Naive thymus-derived CD8-positive, alpha-beta T cell (primary cell): ENCODE measurements at regions of chr4 and their contacts with region 1.

Region 1: DNA sequence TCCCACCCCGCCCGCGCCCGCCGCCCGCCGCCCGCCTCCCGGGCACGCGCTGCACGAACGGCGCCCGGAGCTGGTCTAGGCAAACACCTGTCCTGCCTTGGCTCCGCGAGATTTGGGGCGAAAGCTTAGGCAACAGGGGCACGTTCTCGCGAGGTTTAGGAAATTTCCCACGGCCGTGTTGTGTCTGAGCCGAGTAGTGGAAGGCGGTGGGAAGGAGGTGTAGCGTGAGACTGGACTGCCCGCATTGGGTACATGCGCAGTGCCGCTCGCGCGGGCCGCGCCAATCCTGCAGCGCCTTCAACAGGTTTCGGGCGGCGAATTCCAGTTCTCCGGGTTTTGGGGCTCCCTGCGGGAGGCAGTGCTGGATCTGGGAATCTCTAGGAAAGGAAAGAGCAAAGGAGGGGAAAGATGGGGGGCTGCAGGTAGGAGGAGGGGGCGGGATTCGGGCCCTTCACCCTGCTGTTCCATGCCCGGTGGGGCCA is 1.3 kb upstream of the RBPJ start:
- DNase-seq: peak; percentile 82 to 98 (median 94)
- ATAC-seq: peak; percentile 72 to 78
- H3K4me3 Mint-ChIP-seq: peak overlapping the region; percentile 92 to 100 (median 98)
- H3K27ac Mint-ChIP-seq: peak overlapping the region; percentile 95 to 99 (median 98)
- H3K4me1 Mint-ChIP-seq: peaks cover 20 to 44% (median 34%) of the 10 kb centered on the region in 4 donors
- H3K27me3 Mint-ChIP-seq: no peaks in the 10 kb centered on the region

Region 2: DNA sequence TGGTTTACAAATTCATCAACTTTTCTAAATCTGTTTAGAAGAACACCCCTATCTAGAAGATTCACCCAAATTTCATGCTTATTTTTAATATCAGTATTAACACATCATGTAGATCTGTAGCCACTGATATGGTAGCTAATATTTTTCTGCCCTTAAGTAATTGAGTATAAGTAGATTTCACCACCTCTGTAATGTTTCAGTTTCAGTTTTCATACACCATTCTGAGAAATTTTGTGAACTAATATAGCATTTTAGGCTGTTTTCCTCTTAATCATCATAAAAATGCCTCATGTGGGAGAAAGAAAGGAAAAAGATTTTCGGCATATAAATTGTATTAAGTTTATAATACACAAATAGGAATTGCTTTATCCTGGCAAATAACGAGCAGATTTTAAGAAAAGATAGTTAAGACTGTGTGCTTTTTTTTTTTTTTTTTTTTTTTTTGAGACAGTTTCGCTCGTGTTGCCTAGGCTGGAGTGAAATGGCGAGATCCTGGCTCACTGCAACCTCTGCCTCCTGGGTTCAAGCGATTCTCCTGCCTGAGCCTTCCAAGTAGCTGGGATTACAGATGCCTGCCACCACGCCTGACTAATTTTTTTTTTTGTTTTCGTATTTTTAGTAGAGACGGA is 20.1 kb before region 1 on chr4:
- POLR2A ChIA-PET with region 1: no interaction called
- DNase-seq: no peak
- ATAC-seq: no peak
- H3K4me3 Mint-ChIP-seq: peak overlapping the region in 2 of 10 donors; percentile 6 to 41
- H3K27ac Mint-ChIP-seq: no peak overlapping the region
- H3K4me1 Mint-ChIP-seq: peaks cover 0 to 5% (median 0%) of the 10 kb centered on the region in 4 donors
- H3K27me3 Mint-ChIP-seq: peaks cover 4 to 7% (median 4%) of the 10 kb centered on the region in 5 donors

Region 3: DNA sequence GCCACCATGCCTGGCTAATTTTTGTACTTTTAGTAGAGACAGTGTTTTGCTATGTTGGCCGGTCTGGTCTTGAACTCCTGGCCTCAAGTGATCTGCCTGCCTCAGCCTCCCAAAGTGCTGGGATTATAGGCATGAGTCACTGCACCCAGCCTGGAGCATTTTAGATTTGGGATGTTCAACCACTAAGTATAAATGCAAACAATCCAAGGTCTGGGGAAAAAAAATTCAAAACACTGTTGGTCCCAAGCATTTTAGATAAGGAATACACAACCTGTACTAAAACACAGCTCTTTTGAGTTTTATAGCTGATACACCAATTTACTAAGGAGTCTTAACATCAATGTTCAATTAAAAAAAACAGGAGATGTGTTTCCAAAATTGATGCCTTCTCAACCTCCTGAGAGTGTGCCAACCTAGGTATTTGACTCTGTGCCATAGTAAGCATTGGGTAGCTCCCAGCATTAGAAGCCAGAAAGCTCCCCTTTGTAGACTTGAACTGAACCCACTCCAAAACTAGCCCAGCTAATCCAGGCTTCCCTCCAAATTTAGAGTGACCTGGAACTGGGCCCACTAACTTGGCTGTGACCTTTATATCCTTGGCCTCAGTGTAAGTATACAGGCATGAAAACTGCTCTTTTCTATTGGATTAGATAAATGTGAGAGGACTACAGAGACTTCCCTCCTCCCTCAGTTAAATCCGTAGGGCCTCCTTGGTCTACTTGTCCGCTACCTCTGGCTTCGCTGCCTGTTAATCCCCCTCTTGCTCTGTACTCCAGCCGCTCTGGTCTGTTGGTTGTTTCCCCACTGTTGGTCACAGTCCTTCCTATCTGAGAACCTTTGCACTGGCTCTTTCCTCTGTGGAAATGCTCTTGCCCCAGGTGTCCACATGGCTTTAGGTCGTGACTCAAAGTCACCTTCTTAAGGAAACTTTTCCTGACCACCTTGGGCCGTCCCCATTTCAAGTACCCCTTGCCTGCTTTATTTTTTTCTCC is 93.2 kb after region 1 on chr4:
- POLR2A ChIA-PET with region 1: no interaction called
- DNase-seq: no peak
- ATAC-seq: no peak
- H3K4me3 Mint-ChIP-seq: no peak overlapping the region
- H3K27ac Mint-ChIP-seq: peak overlapping the region in 2 of 10 donors; percentile 7 to 17
- H3K4me1 Mint-ChIP-seq: peaks cover 0 to 2% (median under 1%) of the 10 kb centered on the region in 4 donors
- H3K27me3 Mint-ChIP-seq: no peaks in the 10 kb centered on the region

Region 4: DNA sequence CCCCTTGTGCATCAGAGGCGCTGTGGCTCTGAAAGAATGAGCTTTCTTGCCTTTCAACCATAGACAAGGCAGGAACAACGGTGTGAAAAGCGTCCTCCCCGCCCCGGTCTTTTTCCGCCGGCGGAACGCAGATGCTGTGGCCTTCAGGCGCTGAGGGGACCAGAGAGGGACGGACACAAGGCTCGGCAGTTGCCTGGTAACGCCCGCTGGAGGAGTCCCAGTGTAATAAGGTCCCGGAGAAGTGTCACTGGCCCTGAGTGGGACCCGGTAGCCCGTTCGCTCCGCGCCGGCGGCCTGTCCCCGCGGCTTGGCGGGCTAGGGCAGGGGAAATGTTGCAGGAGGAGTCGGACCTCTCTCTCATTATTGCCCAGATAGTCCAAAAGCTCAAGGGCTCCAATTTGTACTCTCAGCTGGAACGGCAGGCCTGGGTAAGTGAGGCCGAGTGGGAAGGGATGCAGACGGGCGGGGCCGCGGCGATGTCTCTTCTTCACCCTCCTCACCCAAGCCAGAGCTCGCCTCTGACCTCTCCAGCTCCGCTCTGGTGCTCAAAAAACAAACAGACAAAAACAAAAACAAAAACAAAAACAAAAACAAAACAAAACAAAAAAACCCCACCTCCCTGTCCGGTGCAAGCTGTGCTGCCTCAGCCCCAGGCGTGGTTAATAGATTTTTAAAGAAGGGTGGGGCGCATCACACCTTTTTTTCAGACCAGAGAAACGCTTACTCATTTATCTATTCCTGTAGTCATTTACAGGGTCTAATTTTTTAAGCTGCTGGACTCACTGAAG is 264.6 kb after region 1 on chr4 and contains the start of gene TBC1D19:
- POLR2A ChIA-PET with region 1: interaction called, 10 read pairs
- DNase-seq: peak; percentile 68 to 92 (median 89)
- ATAC-seq: peak; percentile 85 to 92
- H3K4me3 Mint-ChIP-seq: peak within 1 kb of the TSS; percentile 90 to 98 (median 95)
- H3K27ac Mint-ChIP-seq: peak within 1 kb of the TSS; percentile 95 to 99 (median 98)
- H3K4me1 Mint-ChIP-seq: peaks cover 9 to 29% (median 27%) of the 10 kb centered on the region in 4 donors
- H3K27me3 Mint-ChIP-seq: peaks cover 1 to 10% (median 2%) of the 10 kb centered on the region in 5 donors
- polyA plus RNA-seq, gene TBC1D19: 2.2 to 4.1 (median 2.5) TPM